ENCODE measurements at regions of chr3 and their contacts with region 1.

Region 1: DNA sequence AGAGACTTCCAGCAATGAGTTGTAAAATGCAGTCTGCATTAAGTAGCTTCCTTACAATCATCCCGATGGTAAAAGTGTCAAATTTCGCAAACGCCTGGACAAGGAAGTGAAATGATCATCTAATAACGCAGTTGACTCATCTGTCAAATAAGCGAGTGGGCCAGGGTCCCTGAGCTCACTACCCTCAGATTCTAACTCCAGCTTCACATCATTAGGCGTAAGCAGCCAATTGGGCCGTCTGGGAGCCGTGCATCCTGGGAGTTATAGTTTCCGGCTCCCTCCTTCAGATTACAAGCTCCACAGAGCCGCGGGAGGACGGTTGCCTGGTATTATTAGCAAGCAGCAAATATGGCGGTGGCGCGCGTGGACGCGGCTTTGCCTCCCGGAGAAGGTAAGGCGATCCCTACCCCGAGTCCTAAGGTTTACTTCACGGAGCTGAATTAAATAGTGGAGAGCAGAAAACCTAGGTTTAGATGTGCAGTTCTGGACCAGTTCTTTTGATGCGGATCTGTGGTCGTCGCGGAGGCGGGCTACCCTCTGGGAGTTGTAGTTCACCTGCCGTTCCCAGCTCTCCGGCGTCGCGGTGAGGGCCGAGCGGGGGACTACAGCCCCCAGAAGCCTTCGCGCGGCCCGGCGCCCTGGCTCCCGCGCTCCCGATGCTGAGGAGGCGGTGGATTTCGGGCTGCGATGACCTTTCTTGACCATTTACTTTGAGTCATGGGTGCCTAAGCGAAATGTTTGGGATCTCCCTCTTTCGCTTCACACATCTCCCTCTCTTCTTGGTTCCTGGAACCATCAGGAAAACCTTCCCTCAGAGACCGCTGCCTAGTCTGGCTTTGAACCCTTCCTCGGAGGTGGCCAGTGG is at the start of gene CEP97:
- DNase-seq: peak; percentile 95
- ATAC-seq: peak; percentile 93
- H3K4me3 Mint-ChIP-seq: peak within 1 kb of the TSS; percentile 97
- H3K27ac Mint-ChIP-seq: peak within 1 kb of the TSS; percentile 97
- H3K4me1 Mint-ChIP-seq: peaks cover 46% of the 10 kb centered on the region
- H3K27me3 Mint-ChIP-seq: no peaks in the 10 kb centered on the region
- total RNA-seq, gene CEP97: 18.1 to 20.0 TPM

Region 2: DNA sequence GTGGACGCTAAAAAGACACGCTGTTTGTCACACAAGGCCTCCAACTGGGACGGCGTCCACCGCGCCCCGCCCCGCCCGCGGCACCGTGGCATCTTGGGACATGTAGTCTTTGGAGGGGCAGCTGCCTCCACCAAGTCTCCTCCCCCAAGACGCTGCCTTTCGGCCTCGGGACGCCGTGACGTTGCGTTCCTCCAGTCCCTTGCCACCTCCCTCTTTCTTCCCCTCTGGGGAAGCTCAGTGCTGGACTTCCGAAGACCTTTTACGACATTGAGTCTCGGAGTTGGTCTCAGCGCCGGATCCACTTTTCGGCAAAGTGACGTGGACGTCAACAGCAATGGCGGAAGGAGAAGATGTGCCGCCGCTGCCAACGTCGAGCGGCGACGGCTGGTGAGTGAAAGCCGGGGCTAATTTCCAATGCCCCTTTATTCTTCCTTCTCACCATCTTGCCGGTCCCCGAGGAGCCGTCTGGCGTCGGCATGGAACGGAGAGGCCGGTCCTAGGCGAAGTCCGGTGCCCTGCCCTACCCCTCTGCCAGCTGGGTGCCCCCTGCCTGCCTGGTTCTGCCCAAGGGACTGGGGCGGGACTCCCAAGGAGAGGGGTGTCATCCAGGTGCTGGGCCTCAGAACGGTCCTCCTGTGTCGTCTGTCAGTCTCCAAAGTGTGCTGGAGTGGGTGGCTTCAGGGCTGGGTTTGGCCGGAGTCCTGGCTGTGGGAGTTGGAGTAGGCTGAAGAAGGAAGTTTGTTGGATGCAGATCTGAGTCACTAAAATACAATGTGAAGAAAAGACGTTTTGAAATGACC is 1463.7 kb before region 1 on chr3 and contains the start of gene TBC1D23:
- CTCF ChIA-PET with region 1: no interaction called
- POLR2A ChIA-PET with region 1: no interaction called
- intact Hi-C with region 1: loop called in 1 of 2 experiments (anchors 2 kb)
- DNase-seq: peak; percentile 98
- ATAC-seq: peak; percentile 100
- H3K4me3 Mint-ChIP-seq: peak within 1 kb of the TSS; percentile 91
- H3K27ac Mint-ChIP-seq: peak within 1 kb of the TSS; percentile 96
- H3K4me1 Mint-ChIP-seq: peaks cover 58% of the 10 kb centered on the region
- H3K27me3 Mint-ChIP-seq: no peaks in the 10 kb centered on the region
- total RNA-seq, gene TBC1D23: 17.6 to 19.4 TPM

Region 3: GRCh38 chr3:101518421-101518871 is 206.1 kb before region 1 on chr3:
- CTCF ChIA-PET with region 1: no interaction called
- POLR2A ChIA-PET with region 1: no interaction called
- intact Hi-C with region 1: loop called in 1 of 2 experiments (anchors 1 kb)
- DNase-seq: peak; percentile 67
- ATAC-seq: peak; percentile 93
- H3K4me3 Mint-ChIP-seq: peak overlapping the region; percentile 63
- H3K27ac Mint-ChIP-seq: peak overlapping the region; percentile 92
- H3K4me1 Mint-ChIP-seq: peaks cover 58% of the 10 kb centered on the region
- H3K27me3 Mint-ChIP-seq: no peaks in the 10 kb centered on the region

Region 4: GRCh38 chr3:101685870-101686412 is 38.6 kb before region 1 on chr3:
- CTCF ChIA-PET with region 1: interaction called, 5 read pairs
- POLR2A ChIA-PET with region 1: interaction called, 20 read pairs
- intact Hi-C with region 1: loop called (anchors 1 kb)
- DNase-seq: no peak
- ATAC-seq: no peak
- H3K4me3 Mint-ChIP-seq: peak overlapping the region; percentile 100
- H3K27ac Mint-ChIP-seq: peak overlapping the region; percentile 99
- H3K4me1 Mint-ChIP-seq: peaks cover 45% of the 10 kb centered on the region
- H3K27me3 Mint-ChIP-seq: no peaks in the 10 kb centered on the region

Region 5: GRCh38 chr3:101779047-101779821 is 54.7 kb after region 1 on chr3 and contains the start of gene NXPE3:
- CTCF ChIA-PET with region 1: interaction called, 7 read pairs
- POLR2A ChIA-PET with region 1: interaction called, 10 read pairs
- intact Hi-C with region 1: loop called (anchors 1 kb)
- DNase-seq: peak; percentile 97
- ATAC-seq: peak; percentile 92
- H3K4me3 Mint-ChIP-seq: peak within 1 kb of the TSS; percentile 91
- H3K27ac Mint-ChIP-seq: peak within 1 kb of the TSS; percentile 96
- H3K4me1 Mint-ChIP-seq: peaks cover 49% of the 10 kb centered on the region
- H3K27me3 Mint-ChIP-seq: no peaks in the 10 kb centered on the region
- total RNA-seq, gene NXPE3: 12.8 to 18.5 TPM

Region 6: DNA sequence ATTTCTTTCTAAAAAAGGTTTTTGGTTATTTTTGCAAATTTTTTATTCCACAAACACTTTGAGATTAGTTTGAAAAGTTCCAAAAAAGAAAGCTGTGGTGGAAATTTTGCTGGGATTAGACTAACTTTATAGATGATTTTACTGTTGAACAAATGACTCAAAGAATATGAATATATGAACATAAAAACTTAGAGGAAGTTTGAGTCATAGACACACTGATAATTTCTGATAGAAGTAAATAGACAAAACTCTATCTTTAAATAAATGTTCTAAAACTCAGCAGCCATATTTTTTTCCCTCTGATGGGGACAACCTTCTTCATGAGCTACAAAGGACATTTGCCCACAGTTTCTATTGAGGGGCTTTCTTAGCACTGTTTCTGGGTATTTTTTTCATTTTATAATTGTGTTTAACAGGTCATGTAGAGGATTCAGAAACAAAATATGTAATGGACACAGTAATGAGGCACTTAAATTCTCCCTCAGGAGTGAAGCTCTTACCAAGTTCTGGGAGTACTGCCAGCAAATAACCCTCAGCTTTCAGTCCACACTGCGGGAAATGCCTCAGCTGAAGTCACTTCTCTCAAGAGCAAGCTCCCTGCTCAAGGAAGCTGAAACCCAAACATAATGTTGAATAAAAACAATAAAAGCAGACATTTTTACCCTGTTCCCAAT is 282.4 kb after region 1 on chr3:
- CTCF ChIA-PET with region 1: no interaction called
- POLR2A ChIA-PET with region 1: no interaction called
- intact Hi-C with region 1: no loop called
- DNase-seq: no peak
- ATAC-seq: no peak
- H3K4me3 Mint-ChIP-seq: no peak overlapping the region
- H3K27ac Mint-ChIP-seq: no peak overlapping the region
- H3K4me1 Mint-ChIP-seq: no peaks in the 10 kb centered on the region
- H3K27me3 Mint-ChIP-seq: no peaks in the 10 kb centered on the region